ENCODE measurements at regions of chr12 and their contacts with region 1.

Region 1: GRCh38 chr12:104596134-104596799 is 139.5 kb downstream of the CHST11 start:
- DNase-seq: no peak
- ATAC-seq: no peak
- H3K4me3 ChIP-seq: no peak overlapping the region
- H3K27ac ChIP-seq: no peak overlapping the region
- H3K4me1 ChIP-seq: peaks cover 22 to 69% of the 10 kb centered on the region in 2 experiments
- H3K27me3 ChIP-seq: no peaks in the 10 kb centered on the region
- CTCF ChIP-seq: no peak
- EP300 ChIP-seq: no peak
- POLR2A ChIP-seq: no peak
- RAD21 ChIP-seq: no peak

Region 2: GRCh38 chr12:104411826-104412641 is 184.2 kb before region 1 on chr12:
- CTCF ChIA-PET with region 1: no interaction called
- POLR2A ChIA-PET with region 1: no interaction called
- in situ Hi-C with region 1: no loop called
- intact Hi-C with region 1: no loop called
- DNase-seq: peak; percentile 27 to 45 (median 37)
- ATAC-seq: no peak; the same call in 2 of the 3 replicates
- H3K4me3 ChIP-seq: no peak overlapping the region
- H3K27ac ChIP-seq: no peak overlapping the region
- H3K4me1 ChIP-seq: peaks cover 14% of the 10 kb centered on the region in 2 experiments; a peak in 3 of 5 replicates
- H3K27me3 ChIP-seq: no peaks in the 10 kb centered on the region; a peak in 1 of 5 replicates
- CTCF ChIP-seq: no peak
- EP300 ChIP-seq: no peak
- POLR2A ChIP-seq: no peak
- RAD21 ChIP-seq: no peak

Region 3: GRCh38 chr12:104520242-104520900 is 75.9 kb before region 1 on chr12:
- CTCF ChIA-PET with region 1: no interaction called
- POLR2A ChIA-PET with region 1: no interaction called
- in situ Hi-C with region 1: no loop called
- intact Hi-C with region 1: loop called (anchors 5 kb)
- DNase-seq: no peak
- ATAC-seq: no peak
- H3K4me3 ChIP-seq: no peak overlapping the region
- H3K27ac ChIP-seq: no peak overlapping the region
- H3K4me1 ChIP-seq: peaks cover 0 to 26% of the 10 kb centered on the region in 2 experiments; a peak in 3 of 5 replicates
- H3K27me3 ChIP-seq: no peaks in the 10 kb centered on the region
- CTCF ChIP-seq: no peak
- EP300 ChIP-seq: no peak
- POLR2A ChIP-seq: no peak
- RAD21 ChIP-seq: no peak

Measured in K562 (cell line).